Body of pancreas (tissue), 4 donors: ENCODE measurements at regions of chr6 and their contacts with region 1.

Region 1: DNA sequence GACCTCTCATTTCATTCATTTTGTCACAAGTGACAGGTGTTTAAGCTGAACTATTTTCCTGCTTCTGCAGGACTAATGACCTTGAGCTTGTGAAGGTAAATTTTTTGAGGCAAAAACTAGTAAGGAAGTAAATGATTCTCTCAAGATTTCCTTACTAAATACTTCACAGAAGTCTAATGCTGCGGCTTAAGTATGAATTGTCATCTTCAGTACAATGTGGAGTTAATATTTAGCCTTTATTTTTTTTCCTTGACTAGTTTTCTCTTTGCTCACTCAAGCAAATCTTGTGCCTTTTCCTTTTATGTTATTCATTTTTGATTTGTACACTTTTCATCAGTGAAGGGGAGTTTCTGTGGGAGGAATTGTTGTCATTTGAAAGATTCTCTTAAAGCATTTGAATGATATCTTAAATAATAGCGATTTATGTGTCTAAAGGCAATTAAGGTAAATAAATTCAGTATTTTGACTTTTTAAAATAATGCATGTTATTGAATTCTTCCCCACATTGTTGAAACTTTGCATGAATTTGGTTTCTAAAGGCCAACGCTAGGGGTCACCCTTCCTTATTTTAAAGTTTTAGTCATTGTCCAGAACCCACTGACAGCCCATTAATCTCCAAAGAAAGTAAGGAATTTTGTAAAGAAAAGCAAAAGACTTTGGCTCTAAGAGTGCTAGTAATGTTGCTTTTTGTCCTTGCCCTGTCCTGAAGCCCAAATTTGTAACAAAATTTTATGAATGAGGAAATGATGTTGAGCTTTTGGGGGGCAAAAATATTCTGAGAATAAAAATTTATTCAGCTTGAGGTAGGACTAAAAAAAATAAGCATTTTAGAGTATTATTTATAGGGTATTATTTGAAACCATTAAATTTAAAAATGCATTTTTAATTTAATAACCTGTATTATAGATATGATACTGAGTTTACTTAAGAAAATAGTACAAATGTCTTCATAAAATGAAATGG is 157.4 kb upstream of the LAMA2 start:
- DNase-seq: peak in 3 of 4 donors; percentile 9 to 24 (median 17)
- ATAC-seq: no peak
- H3K4me3 ChIP-seq: no peak overlapping the region
- H3K27ac ChIP-seq: no peak overlapping the region
- H3K4me1 ChIP-seq: no peaks in the 10 kb centered on the region
- H3K27me3 ChIP-seq: no peaks in the 10 kb centered on the region
- CTCF ChIP-seq: peak; percentile 14 to 50 (median 47)
- POLR2A ChIP-seq: no peak

Region 2: GRCh38 chr6:127737009-127737486 is 988.5 kb before region 1 on chr6:
- intact Hi-C with region 1: loop called (anchors 10 kb)
- DNase-seq: peak; percentile 31 to 55 (median 52)
- ATAC-seq: peak; percentile 83
- H3K4me3 ChIP-seq: no peak overlapping the region
- H3K27ac ChIP-seq: no peak overlapping the region
- H3K4me1 ChIP-seq: peaks cover 7% of the 10 kb centered on the region
- H3K27me3 ChIP-seq: no peaks in the 10 kb centered on the region
- CTCF ChIP-seq: peak in 6 of 7 experiments; percentile 50 to 71 (median 62)
- POLR2A ChIP-seq: no peak

Region 3: DNA sequence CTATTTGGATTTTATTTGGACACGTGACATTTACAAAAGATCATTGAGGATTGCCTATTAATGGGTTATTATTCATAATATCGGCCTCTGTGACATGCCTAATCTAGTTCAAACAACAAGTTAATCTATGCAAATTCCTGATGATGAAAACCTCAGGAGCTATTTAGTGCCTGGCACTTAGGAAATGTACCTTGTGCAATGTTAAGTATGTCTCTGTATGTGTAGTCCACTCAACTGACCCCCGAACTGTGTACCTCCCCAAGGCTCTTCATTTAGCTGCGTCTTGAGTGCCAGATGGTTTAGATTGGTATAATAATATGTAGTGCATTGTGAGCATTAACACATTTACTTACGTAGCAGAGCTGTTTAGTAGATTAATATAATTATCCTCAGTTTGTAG is 164.3 kb after region 1 on chr6:
- intact Hi-C with region 1: no loop called
- DNase-seq: no peak
- ATAC-seq: no peak
- H3K4me3 ChIP-seq: no peak overlapping the region
- H3K27ac ChIP-seq: no peak overlapping the region
- H3K4me1 ChIP-seq: no peaks in the 10 kb centered on the region
- H3K27me3 ChIP-seq: no peaks in the 10 kb centered on the region
- CTCF ChIP-seq: no peak
- POLR2A ChIP-seq: no peak